ENCODE measurements at regions of chr1 and their contacts with region 1.

Region 1: DNA sequence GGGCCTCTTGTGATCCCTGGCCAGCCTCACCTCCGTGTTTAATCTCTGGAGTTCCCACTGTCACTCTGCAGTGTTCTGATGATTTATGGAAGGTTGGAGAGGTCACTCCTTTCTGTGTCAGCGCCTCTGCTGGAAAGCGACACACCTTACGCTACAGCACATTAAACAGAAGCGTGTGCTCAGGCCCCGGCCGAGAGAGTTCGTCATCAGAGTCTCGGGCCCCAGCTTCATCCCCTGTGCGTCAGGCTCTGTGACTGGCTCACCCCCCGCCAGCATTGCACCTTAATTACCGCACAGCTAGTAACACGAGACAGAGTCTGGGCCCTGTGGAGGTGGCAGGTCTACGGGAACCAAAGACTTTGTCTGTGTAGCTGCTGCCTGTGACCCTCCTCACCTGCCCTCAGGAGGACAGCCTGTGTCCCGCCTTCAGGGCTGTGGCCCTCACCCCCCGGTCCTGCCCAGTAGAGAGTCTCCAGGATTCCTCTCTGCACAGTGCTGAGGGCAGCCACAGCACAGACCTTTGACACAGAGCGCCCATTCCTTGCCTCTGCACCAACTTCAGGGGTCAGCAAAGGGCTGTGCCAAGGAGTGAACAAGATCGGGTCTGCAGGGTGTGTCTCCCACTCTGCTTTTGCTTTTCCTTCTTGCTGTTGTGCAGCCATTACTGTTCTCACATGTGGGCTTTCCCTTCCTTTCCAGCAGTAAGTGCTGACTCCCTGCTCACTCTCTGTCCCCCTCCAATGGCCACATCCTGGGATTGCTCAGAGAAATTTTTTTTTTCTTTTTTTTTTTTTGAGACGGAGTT is 157.6 kb downstream of the PGBD5 start:
- DNase-seq: peak; percentile 64
- H3K4me3 ChIP-seq: no peak overlapping the region
- H3K27ac ChIP-seq: no peak overlapping the region
- H3K4me1 ChIP-seq: peaks cover 16% of the 10 kb centered on the region
- H3K27me3 ChIP-seq: no peaks in the 10 kb centered on the region
- CTCF ChIP-seq: peak; percentile 51 to 68
- POLR2A ChIP-seq: no peak

Region 2: GRCh38 chr1:229625915-229626831 is 642.4 kb before region 1 on chr1 and contains the starts of genes TAF5L and URB2:
- CTCF ChIA-PET with region 1: no interaction called
- POLR2A ChIA-PET with region 1: no interaction called
- dilution Hi-C with region 1: no loop called
- intact Hi-C with region 1: loop called (anchors 1 kb)
- DNase-seq: peak; percentile 84
- H3K4me3 ChIP-seq: peak within 1 kb of the TSS; percentile 75 to 98 (median 96)
- H3K27ac ChIP-seq: peak within 1 kb of the TSS; percentile 41
- H3K4me1 ChIP-seq: peaks cover 16% of the 10 kb centered on the region
- H3K27me3 ChIP-seq: no peaks in the 10 kb centered on the region
- CTCF ChIP-seq: no peak
- POLR2A ChIP-seq: peak; percentile 69
- total RNA-seq, gene TAF5L: 20.3 and 24.8 TPM in 2 replicates
- total RNA-seq, gene URB2: 12.4 and 12.7 TPM in 2 replicates

Region 3: GRCh38 chr1:229661022-229661877 is 607.3 kb before region 1 on chr1:
- CTCF ChIA-PET with region 1: interaction called, 11 read pairs
- POLR2A ChIA-PET with region 1: no interaction called
- dilution Hi-C with region 1: no loop called
- intact Hi-C with region 1: loop called (anchors 1 kb)
- DNase-seq: peak; percentile 61
- H3K4me3 ChIP-seq: no peak overlapping the region
- H3K27ac ChIP-seq: no peak overlapping the region
- H3K4me1 ChIP-seq: peaks cover 17% of the 10 kb centered on the region
- H3K27me3 ChIP-seq: no peaks in the 10 kb centered on the region
- CTCF ChIP-seq: peak; percentile 82 to 92
- POLR2A ChIP-seq: no peak

Region 4: DNA sequence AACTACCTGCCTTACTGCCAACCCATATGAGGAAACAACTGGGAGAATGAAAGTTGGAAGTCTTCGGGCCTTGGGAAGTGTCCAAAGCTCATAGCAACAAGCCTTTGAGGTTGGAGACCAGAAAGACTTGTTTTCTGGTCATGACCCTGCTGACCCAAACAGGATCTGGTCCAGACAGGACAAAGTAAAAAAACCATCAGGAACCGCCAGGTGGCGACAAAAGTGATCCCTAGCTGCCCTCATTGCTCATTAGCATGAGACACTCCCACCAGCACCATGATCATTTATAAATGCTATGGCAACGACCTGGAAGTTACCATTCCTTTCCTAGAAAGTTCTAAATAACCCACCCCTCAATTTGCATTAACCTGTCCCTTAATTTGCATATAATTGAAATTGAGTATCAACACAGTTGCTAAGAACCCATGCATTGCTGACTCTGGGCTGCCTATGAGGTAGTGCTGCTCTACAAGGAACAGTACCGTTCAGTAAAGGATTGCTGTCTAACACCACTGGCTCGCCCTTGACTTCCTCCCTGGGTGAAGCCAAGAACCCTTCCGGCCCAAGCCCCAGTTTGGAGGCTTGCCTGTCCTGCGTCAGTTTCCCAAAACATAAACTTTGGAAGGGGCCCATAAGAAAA is 553.5 kb before region 1 on chr1:
- CTCF ChIA-PET with region 1: no interaction called
- POLR2A ChIA-PET with region 1: no interaction called
- dilution Hi-C with region 1: no loop called
- intact Hi-C with region 1: loop called (anchors 1 kb)
- DNase-seq: peak; percentile 32
- H3K4me3 ChIP-seq: no peak overlapping the region
- H3K27ac ChIP-seq: no peak overlapping the region
- H3K4me1 ChIP-seq: no peaks in the 10 kb centered on the region
- H3K27me3 ChIP-seq: no peaks in the 10 kb centered on the region
- CTCF ChIP-seq: peak; percentile 30 to 33
- POLR2A ChIP-seq: no peak

Region 5: DNA sequence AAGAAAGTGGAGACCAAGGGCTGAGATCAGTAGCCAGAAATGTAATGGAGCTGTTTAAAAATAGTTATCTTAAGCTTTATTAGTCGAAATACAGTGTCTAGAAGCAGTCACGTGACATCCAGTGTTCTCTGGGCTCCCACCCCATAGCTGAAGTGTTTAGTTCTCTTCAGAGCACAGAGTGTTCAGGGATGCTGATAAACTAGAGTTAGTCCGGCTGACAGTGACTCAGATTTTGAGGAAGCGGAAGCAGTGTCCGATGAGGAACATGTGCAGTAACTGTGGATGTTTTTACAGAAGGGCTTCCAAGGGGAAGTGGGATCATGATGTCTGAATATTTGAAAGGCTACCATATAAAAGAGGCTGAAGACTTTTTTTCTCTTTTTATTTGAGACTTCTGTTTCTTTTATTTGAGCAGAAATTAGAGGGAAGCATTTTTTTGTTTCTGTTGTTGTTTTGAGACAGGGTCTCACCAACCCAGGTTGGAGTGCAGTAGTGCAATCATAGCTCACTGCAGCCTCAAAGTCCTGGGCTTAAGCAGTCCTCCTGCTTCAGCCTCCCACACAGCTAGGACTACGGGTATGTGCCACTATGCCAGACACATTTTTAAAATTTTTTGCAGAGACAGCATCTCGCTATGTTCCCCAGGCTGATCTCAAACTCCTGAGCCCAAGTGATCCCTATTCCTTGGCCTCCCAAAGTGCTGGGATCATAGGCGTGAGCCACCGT is 77.3 kb before region 1 on chr1:
- CTCF ChIA-PET with region 1: interaction called, 4 read pairs
- POLR2A ChIA-PET with region 1: no interaction called
- dilution Hi-C with region 1: no loop called
- intact Hi-C with region 1: loop called (anchors 1 kb)
- DNase-seq: peak; percentile 83
- H3K4me3 ChIP-seq: no peak overlapping the region
- H3K27ac ChIP-seq: peak overlapping the region; percentile 57
- H3K4me1 ChIP-seq: peaks cover 25% of the 10 kb centered on the region
- H3K27me3 ChIP-seq: no peaks in the 10 kb centered on the region
- CTCF ChIP-seq: no peak
- POLR2A ChIP-seq: no peak